Heart left ventricle (tissue), 16 donors: ENCODE measurements at regions of chr6 and their contacts with region 1.

Region 1: GRCh38 chr6:102853269-102853955 is 1459.9 kb downstream of the GRIK2 start:
- DNase-seq: no peak
- ATAC-seq: no peak
- H3K4me3 ChIP-seq: no peak overlapping the region
- H3K27ac ChIP-seq: no peak overlapping the region
- H3K4me1 ChIP-seq: no peaks in the 10 kb centered on the region
- H3K27me3 ChIP-seq: peaks cover 0 to 3% (median 0%) of the 10 kb centered on the region in 9 donors
- CTCF ChIP-seq: no peak
- POLR2A ChIP-seq: no peak

Region 2: GRCh38 chr6:102895683-102896082 is 42.3 kb after region 1 on chr6:
- intact Hi-C with region 1: no loop called
- DNase-seq: no peak
- ATAC-seq: no peak
- H3K4me3 ChIP-seq: no peak overlapping the region
- H3K27ac ChIP-seq: no peak overlapping the region
- H3K4me1 ChIP-seq: no peaks in the 10 kb centered on the region
- H3K27me3 ChIP-seq: no peaks in the 10 kb centered on the region
- CTCF ChIP-seq: no peak
- POLR2A ChIP-seq: no peak

Region 3: GRCh38 chr6:103273048-103273447 is 419.6 kb after region 1 on chr6:
- intact Hi-C with region 1: loop called in 3 of 10 experiments (anchors 5 to 10 kb)
- DNase-seq: no peak
- ATAC-seq: peak in 1 of 4 donors; percentile 47
- H3K4me3 ChIP-seq: no peak overlapping the region
- H3K27ac ChIP-seq: no peak overlapping the region
- H3K4me1 ChIP-seq: no peaks in the 10 kb centered on the region
- H3K27me3 ChIP-seq: no peaks in the 10 kb centered on the region
- CTCF ChIP-seq: peak in 9 of 12 donors; percentile 13 to 38 (median 30)
- POLR2A ChIP-seq: no peak